Naive thymus-derived CD4-positive, alpha-beta T cell (primary cell): ENCODE measurements at regions of chr7 and their contacts with region 1.

Region 1: GRCh38 chr7:4641667-4642467 is 40.2 kb upstream of the FOXK1 start:
- DNase-seq: peak; percentile 94 to 99 (median 98)
- ATAC-seq: peak; percentile 92
- H3K4me3 ChIP-seq: peak overlapping the region; percentile 85
- H3K4me3 Mint-ChIP-seq: peak overlapping the region; percentile 73 to 94 (median 90)
- H3K27ac ChIP-seq: peak overlapping the region; percentile 87
- H3K27ac Mint-ChIP-seq: peak overlapping the region; percentile 89 to 99 (median 97)
- H3K4me1 ChIP-seq: peaks cover 7 to 10% of the 10 kb centered on the region in 2 donors
- H3K4me1 Mint-ChIP-seq: peaks cover 5 to 26% (median 13%) of the 10 kb centered on the region in 7 donors
- H3K27me3 ChIP-seq: no peaks in the 10 kb centered on the region
- H3K27me3 Mint-ChIP-seq: no peaks in the 10 kb centered on the region

Region 2: GRCh38 chr7:4610768-4611467 is 30.9 kb before region 1 on chr7:
- CTCF ChIA-PET with region 1: no interaction called
- POLR2A ChIA-PET with region 1: interaction called, 7 read pairs
- intact Hi-C with region 1: loop called (anchors 1 to 2 kb)
- DNase-seq: peak; percentile 23 to 77 (median 71)
- ATAC-seq: peak; percentile 91
- H3K4me3 ChIP-seq: no peak overlapping the region
- H3K4me3 Mint-ChIP-seq: no peak overlapping the region
- H3K27ac ChIP-seq: no peak overlapping the region
- H3K27ac Mint-ChIP-seq: peak overlapping the region in 3 of 9 donors; percentile 5 to 67 (median 26)
- H3K4me1 ChIP-seq: peaks cover 0 to 12% of the 10 kb centered on the region in 2 donors
- H3K4me1 Mint-ChIP-seq: peaks cover 11 to 28% (median 20%) of the 10 kb centered on the region in 7 donors
- H3K27me3 ChIP-seq: no peaks in the 10 kb centered on the region
- H3K27me3 Mint-ChIP-seq: peaks cover 0 to 3% (median 0%) of the 10 kb centered on the region in 5 donors

Region 3: GRCh38 chr7:4744391-4745264 is 102.8 kb after region 1 on chr7:
- CTCF ChIA-PET with region 1: no interaction called
- POLR2A ChIA-PET with region 1: interaction called, 11 read pairs
- intact Hi-C with region 1: loop called (anchors 1 kb)
- DNase-seq: peak; percentile 61 to 84 (median 80)
- ATAC-seq: peak; percentile 76
- H3K4me3 ChIP-seq: peak overlapping the region; percentile 65
- H3K4me3 Mint-ChIP-seq: peak overlapping the region; percentile 84 to 92 (median 88)
- H3K27ac ChIP-seq: peak overlapping the region; percentile 82
- H3K27ac Mint-ChIP-seq: peak overlapping the region; percentile 90 to 99 (median 96)
- H3K4me1 ChIP-seq: peaks cover 15 to 61% of the 10 kb centered on the region in 2 donors
- H3K4me1 Mint-ChIP-seq: peaks cover 45 to 89% (median 79%) of the 10 kb centered on the region in 7 donors
- H3K27me3 ChIP-seq: no peaks in the 10 kb centered on the region
- H3K27me3 Mint-ChIP-seq: no peaks in the 10 kb centered on the region

Region 4: GRCh38 chr7:4753711-4754432 is 112.0 kb after region 1 on chr7:
- CTCF ChIA-PET with region 1: no interaction called
- POLR2A ChIA-PET with region 1: interaction called, 4 read pairs
- intact Hi-C with region 1: loop called in 1 of 2 experiments (anchors 2 kb)
- DNase-seq: peak; percentile 67 to 90 (median 83)
- ATAC-seq: peak; percentile 97
- H3K4me3 ChIP-seq: no peak overlapping the region
- H3K4me3 Mint-ChIP-seq: peak overlapping the region in 4 of 10 donors; percentile 4 to 45 (median 19)
- H3K27ac ChIP-seq: peak overlapping the region; percentile 33
- H3K27ac Mint-ChIP-seq: peak overlapping the region in 3 of 9 donors; percentile 75 to 83 (median 81)
- H3K4me1 ChIP-seq: peaks cover 4 to 20% of the 10 kb centered on the region in 2 donors
- H3K4me1 Mint-ChIP-seq: peaks cover 4 to 41% (median 21%) of the 10 kb centered on the region in 7 donors
- H3K27me3 ChIP-seq: no peaks in the 10 kb centered on the region
- H3K27me3 Mint-ChIP-seq: no peaks in the 10 kb centered on the region

Region 5: GRCh38 chr7:5045558-5046396 is 403.9 kb after region 1 on chr7 and contains the start of gene RBAK:
- CTCF ChIA-PET with region 1: no interaction called
- POLR2A ChIA-PET with region 1: interaction called, 5 read pairs
- intact Hi-C with region 1: loop called in 1 of 2 experiments (anchors 1 kb)
- DNase-seq: peak; percentile 74 to 91 (median 86)
- ATAC-seq: peak; percentile 100
- H3K4me3 ChIP-seq: peak within 1 kb of the TSS; percentile 76
- H3K4me3 Mint-ChIP-seq: peak within 1 kb of the TSS; percentile 92 to 98 (median 96)
- H3K27ac ChIP-seq: peak within 1 kb of the TSS; percentile 95
- H3K27ac Mint-ChIP-seq: peak within 1 kb of the TSS; percentile 82 to 97 (median 92)
- H3K4me1 ChIP-seq: peaks cover 4 to 7% of the 10 kb centered on the region in 2 donors
- H3K4me1 Mint-ChIP-seq: peaks cover 16 to 57% (median 51%) of the 10 kb centered on the region in 7 donors
- H3K27me3 ChIP-seq: no peaks in the 10 kb centered on the region
- H3K27me3 Mint-ChIP-seq: peaks cover 0 to 2% (median 0%) of the 10 kb centered on the region in 5 donors
- total RNA-seq, gene RBAK: 11.8 to 21.8 (median 17.5) TPM

Region 6: DNA sequence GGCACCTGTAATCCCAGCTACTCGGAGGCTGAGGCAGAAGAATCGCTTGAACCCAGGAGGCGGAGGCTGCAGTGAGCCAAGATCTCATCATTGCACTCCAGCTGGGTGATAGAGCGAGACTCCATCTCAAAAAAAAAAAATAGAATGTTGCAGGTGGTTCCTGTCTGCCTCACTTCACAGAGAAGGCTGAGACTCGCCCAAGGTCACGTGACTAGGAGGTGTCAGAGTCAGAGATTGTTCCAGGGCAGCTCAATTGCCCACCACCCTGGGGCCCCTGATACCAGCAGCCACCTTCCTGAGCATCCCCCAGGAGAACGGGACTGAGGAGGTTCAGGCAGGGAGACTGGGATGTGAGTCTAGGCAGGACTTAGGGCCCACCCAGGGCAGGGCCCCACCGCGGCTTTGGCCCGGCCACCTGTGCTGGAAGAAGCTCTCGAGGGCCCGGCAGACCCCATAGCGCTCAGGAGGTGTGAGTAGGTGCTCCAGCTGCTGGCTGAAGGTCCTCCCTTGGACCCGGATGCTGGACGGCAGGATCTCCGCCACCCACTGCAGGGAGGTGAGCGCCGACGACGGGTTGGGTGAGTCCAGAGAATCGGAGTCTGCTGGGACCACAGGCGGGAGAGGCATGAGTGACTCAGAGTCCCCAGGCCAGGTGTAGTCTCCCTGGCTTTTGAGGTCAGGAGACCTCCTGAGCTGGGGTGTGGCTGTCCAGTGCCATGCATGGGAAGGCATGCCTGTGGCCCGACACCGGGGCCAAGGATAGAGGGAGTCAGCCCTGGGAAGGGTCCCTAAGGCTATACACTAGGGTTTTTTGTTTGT is 1878.5 kb after region 1 on chr7:
- CTCF ChIA-PET with region 1: no interaction called
- POLR2A ChIA-PET with region 1: no interaction called
- intact Hi-C with region 1: no loop called
- DNase-seq: no peak
- ATAC-seq: no peak
- H3K4me3 ChIP-seq: no peak overlapping the region
- H3K4me3 Mint-ChIP-seq: no peak overlapping the region
- H3K27ac ChIP-seq: no peak overlapping the region
- H3K27ac Mint-ChIP-seq: no peak overlapping the region
- H3K4me1 ChIP-seq: no peaks in the 10 kb centered on the region
- H3K4me1 Mint-ChIP-seq: peaks cover 6 to 11% (median 9%) of the 10 kb centered on the region in 7 donors
- H3K27me3 ChIP-seq: no peaks in the 10 kb centered on the region
- H3K27me3 Mint-ChIP-seq: peaks cover 4 to 9% (median 8%) of the 10 kb centered on the region in 5 donors